Right ventricle myocardium inferior (tissue), 1 donor: ENCODE measurements at regions of chr4 and their contacts with region 1.

Region 1: GRCh38 chr4:87465739-87466366 is 43.5 kb downstream of the NUDT9 start:
- DNase-seq: no peak
- ATAC-seq: no peak

Region 2: GRCh38 chr4:87270144-87270543 is 195.7 kb before region 1 on chr4:
- intact Hi-C with region 1: loop called (anchors 5 kb)
- DNase-seq: no peak
- ATAC-seq: no peak

Region 3: GRCh38 chr4:87353592-87353991 is 112.3 kb before region 1 on chr4:
- intact Hi-C with region 1: no loop called
- DNase-seq: no peak
- ATAC-seq: no peak